ENCODE measurements at regions of chr6 and their contacts with region 1.

Region 1: GRCh38 chr6:74091136-74091793 is 395.3 kb downstream of the CD109 start:
- H3K4me3 ChIP-seq: no peak overlapping the region
- H3K27ac ChIP-seq: no peak overlapping the region
- H3K4me1 ChIP-seq: no peaks in the 10 kb centered on the region
- CTCF ChIP-seq: no peak

Region 2: GRCh38 chr6:74075323-74075722 is 15.9 kb before region 1 on chr6:
- CTCF ChIA-PET with region 1: interaction called, 28 read pairs
- POLR2A ChIA-PET with region 1: no interaction called
- H3K4me3 ChIP-seq: no peak overlapping the region
- H3K27ac ChIP-seq: no peak overlapping the region
- H3K4me1 ChIP-seq: no peaks in the 10 kb centered on the region
- CTCF ChIP-seq: no peak

Region 3: GRCh38 chr6:74114428-74114827 is 23.2 kb after region 1 on chr6:
- CTCF ChIA-PET with region 1: interaction called, 13 read pairs
- POLR2A ChIA-PET with region 1: no interaction called
- H3K4me3 ChIP-seq: no peak overlapping the region
- H3K27ac ChIP-seq: no peak overlapping the region
- H3K4me1 ChIP-seq: no peaks in the 10 kb centered on the region
- CTCF ChIP-seq: no peak